Right ventricle myocardium superior (tissue), 1 donor: ENCODE measurements at regions of chr15 and their contacts with region 1.

Region 1: GRCh38 chr15:81106560-81106959 is 27.5 kb upstream of the CFAP161 start:
- DNase-seq: no peak
- ATAC-seq: peak; percentile 80

Region 2: DNA sequence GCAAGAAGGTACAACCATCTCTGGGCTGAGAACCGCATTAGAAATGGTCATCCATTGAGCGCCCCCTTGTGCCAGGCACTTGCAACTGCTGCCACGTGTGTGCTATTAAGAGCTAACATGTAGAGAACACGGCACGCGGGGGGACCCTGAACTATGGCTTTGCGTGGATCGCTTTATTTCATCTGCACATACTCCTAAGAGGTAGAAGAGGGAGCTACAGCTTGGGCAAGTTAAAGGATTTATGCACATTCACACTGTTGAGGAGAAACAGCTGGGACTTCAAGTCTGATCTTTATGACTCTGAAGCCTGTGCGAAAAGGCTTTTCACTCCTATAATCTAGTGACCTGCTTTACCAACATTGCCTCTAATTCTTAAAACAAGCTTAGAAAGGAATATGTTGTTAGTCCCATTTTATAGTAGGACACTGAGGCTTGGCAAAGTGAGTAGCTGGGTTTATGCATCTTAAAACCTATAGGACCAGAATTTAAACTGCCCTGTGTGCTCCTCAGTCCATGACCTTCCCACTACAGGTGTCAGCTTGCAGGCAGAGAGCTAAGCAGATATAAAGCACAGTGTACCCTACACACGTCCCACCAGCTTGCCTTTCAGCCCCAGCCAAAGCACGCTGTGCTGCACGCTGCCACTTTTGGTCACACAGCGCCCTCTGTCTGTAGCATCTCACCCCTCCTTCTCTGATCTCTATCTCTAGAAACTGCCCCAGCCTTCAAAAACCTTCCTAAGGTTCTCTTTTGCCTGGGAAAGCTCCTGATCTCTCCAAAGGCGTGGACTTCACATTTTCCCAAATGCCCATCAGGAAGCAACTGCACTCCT is 159.6 kb after region 1 on chr15:
- intact Hi-C with region 1: loop called (anchors 2 kb)
- DNase-seq: peak; percentile 86
- ATAC-seq: peak; percentile 96